IMR-90 (cell line): ENCODE measurements at regions of chr10 and their contacts with region 1.

Region 1: GRCh38 chr10:96118604-96119450 is 11.3 kb upstream of the ZNF518A start:
- DNase-seq: no peak
- ATAC-seq: no peak
- H3K4me3 ChIP-seq: no peak overlapping the region
- H3K27ac ChIP-seq: no peak overlapping the region
- H3K4me1 ChIP-seq: no peaks in the 10 kb centered on the region
- H3K27me3 ChIP-seq: no peaks in the 10 kb centered on the region
- CTCF ChIP-seq: no peak
- POLR2A ChIP-seq: no peak
- RAD21 ChIP-seq: no peak

Region 2: GRCh38 chr10:95183271-95184230 is 935.3 kb before region 1 on chr10:
- CTCF ChIA-PET with region 1: no interaction called
- POLR2A ChIA-PET with region 1: no interaction called
- dilution Hi-C with region 1: no loop called
- in situ Hi-C with region 1: no loop called
- intact Hi-C with region 1: no loop called
- DNase-seq: peak; percentile 71
- ATAC-seq: peak; percentile 98
- H3K4me3 ChIP-seq: peak overlapping the region; percentile 65
- H3K27ac ChIP-seq: peak overlapping the region; percentile 48; the same call in 1 of the 2 replicates
- H3K4me1 ChIP-seq: no peaks in the 10 kb centered on the region
- H3K27me3 ChIP-seq: peaks cover 2% of the 10 kb centered on the region
- CTCF ChIP-seq: peak; percentile 94
- POLR2A ChIP-seq: no peak
- RAD21 ChIP-seq: peak; percentile 76

Region 3: GRCh38 chr10:95394161-95394880 is 724.5 kb before region 1 on chr10:
- CTCF ChIA-PET with region 1: no interaction called
- POLR2A ChIA-PET with region 1: no interaction called
- dilution Hi-C with region 1: no loop called
- in situ Hi-C with region 1: no loop called
- intact Hi-C with region 1: no loop called
- DNase-seq: no peak
- ATAC-seq: no peak
- H3K4me3 ChIP-seq: no peak overlapping the region
- H3K27ac ChIP-seq: no peak overlapping the region
- H3K4me1 ChIP-seq: no peaks in the 10 kb centered on the region
- H3K27me3 ChIP-seq: no peaks in the 10 kb centered on the region; the same call in 1 of the 2 replicates
- CTCF ChIP-seq: no peak
- POLR2A ChIP-seq: no peak
- RAD21 ChIP-seq: no peak

Region 4: DNA sequence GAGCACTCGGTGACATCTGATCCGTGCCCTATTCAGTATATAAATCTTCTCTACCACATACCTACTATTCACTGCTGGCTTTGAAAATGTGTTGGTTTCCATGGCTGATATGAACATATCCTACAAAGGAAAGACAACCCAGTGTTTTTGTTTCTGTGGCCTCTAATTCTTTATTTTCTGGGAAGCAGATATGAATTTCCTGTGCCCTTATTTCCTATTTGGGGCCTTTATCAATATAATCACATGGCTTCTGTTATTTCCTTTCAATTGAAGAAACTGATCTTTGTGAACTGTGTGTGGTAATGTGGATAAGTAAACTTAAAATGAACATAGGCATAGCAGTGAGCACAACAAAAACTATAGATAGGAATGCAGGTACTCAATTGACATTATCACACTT is 64.8 kb before region 1 on chr10:
- CTCF ChIA-PET with region 1: no interaction called
- POLR2A ChIA-PET with region 1: no interaction called
- dilution Hi-C with region 1: no loop called
- in situ Hi-C with region 1: no loop called
- intact Hi-C with region 1: loop called (anchors 5 kb)
- DNase-seq: no peak
- ATAC-seq: no peak
- H3K4me3 ChIP-seq: no peak overlapping the region
- H3K27ac ChIP-seq: no peak overlapping the region
- H3K4me1 ChIP-seq: no peaks in the 10 kb centered on the region
- H3K27me3 ChIP-seq: no peaks in the 10 kb centered on the region
- CTCF ChIP-seq: no peak
- POLR2A ChIP-seq: no peak
- RAD21 ChIP-seq: no peak